ENCODE measurements at regions of chr11 and their contacts with region 1.

Region 1: DNA sequence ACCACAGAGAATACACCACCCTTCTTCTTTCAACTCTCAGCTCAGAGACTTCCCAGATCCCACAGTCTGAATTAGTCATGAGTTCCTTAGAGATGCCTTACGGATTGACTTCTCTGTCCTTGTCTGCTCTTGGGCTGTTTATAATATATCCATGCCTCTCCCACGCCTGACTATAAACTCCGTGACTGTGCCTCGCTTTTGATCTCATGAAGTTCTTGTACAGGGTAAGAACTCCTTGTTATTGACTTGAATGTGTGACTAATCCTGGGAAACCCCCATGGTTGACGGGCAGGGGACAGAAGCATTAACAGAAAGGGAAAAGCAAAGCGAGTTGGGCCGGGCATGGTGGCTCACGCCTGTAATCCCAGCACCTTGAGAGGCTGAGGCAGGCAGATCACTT is 62.4 kb upstream of the POU2AF1 start:
- DNase-seq: no peak
- ATAC-seq: no peak
- H3K4me3 Mint-ChIP-seq: no peak overlapping the region
- H3K27ac Mint-ChIP-seq: no peak overlapping the region
- H3K4me1 Mint-ChIP-seq: peaks cover 44% of the 10 kb centered on the region
- H3K27me3 Mint-ChIP-seq: no peaks in the 10 kb centered on the region
- CTCF ChIP-seq: no peak

Region 2: DNA sequence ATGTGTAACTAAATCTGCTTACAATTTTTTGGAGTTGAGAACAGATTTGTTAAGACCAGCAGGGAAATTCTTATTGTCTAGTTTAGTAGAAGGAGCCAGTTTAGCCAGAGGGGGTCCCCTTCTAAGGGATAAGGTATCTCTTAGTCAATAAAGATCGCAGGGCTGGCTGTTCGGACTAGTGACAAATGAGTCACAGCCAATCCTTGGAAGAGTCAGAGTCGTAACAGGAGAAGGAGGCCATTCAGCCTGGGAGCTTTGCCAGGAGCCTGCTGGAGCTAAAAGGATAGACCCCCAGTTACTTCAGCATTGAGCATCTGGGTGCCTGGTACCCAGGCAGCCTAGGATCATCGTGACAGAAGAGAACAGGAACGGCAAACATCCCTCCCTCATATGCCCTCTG is 537.6 kb before region 1 on chr11:
- CTCF ChIA-PET with region 1: no interaction called
- POLR2A ChIA-PET with region 1: no interaction called
- intact Hi-C with region 1: loop called (anchors 5 kb)
- DNase-seq: no peak
- ATAC-seq: no peak
- H3K4me3 Mint-ChIP-seq: no peak overlapping the region
- H3K27ac Mint-ChIP-seq: no peak overlapping the region
- H3K4me1 Mint-ChIP-seq: peaks cover 20% of the 10 kb centered on the region
- H3K27me3 Mint-ChIP-seq: peaks cover 17% of the 10 kb centered on the region
- CTCF ChIP-seq: no peak

Measured in activated B cell treated with CpG ODN at 0.5 μM for 24 hours (primary cell).